Activated T-helper 1 cell treated with anti-CD3 and anti-CD28 coated beads, Interleukin-12 subunit alpha, Interleukin-12 subunit beta, Interleukin-2, Interleukin-4 antibody, amounts not matched to agents 30 ng/mL and 10 ng/mL and 1 ng/mL, durations not matched to agents 14 hours and 24 hours and 36 hours (primary cell): ENCODE measurements at regions of chr11 and their contacts with region 1.

Region 1: GRCh38 chr11:47213985-47214564 is 699 bp upstream of the DDB2 start:
- DNase-seq: peak; percentile 77
- H3K4me3 Mint-ChIP-seq: peak overlapping the region; percentile 96
- H3K27ac Mint-ChIP-seq: peak overlapping the region; percentile 100
- H3K4me1 Mint-ChIP-seq: peaks cover 45% of the 10 kb centered on the region
- H3K27me3 Mint-ChIP-seq: peaks cover 2% of the 10 kb centered on the region

Region 2: DNA sequence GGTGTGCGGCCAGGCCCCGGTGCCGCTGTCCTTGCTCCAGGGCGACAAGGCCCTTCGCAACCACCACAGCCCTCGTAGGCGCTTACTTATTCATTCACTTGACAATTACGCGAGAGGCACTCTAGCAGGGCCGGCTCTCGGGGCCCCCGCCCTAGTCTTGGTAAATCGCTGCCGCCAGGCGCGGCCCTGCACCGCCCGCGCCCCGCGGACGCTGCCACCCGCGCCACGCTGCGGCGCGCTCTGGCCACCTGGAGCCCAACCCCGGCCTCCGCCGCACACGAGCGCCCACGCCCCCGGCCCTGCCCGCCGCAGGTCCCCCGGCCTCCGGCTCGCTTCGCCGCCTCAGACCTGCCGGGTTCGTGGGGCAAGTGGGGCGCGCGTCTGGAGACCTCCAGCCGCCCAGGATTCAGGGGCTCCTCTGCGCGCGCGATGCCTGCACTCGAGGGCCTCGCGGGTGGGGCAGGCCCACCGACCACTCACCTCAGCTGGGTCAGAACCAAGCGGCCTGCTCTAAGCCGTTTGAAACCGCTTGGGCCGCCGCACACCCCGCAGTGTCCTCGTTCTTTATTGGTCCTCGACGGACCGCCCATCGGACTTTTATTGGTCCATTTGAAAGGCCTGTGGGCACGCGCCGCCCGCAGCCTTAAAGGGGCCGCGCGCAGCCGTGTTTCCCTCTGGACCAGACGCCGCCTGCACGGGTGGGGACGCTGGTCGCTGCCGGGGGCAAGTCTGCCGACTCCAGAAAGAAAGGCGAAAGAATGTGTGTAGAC is 368.1 kb before region 1 on chr11 and contains the start of gene CKAP5:
- intact Hi-C with region 1: loop called (anchors 1 kb)
- DNase-seq: peak; percentile 87
- H3K4me3 Mint-ChIP-seq: peak within 1 kb of the TSS; percentile 98
- H3K27ac Mint-ChIP-seq: peak within 1 kb of the TSS; percentile 98
- H3K4me1 Mint-ChIP-seq: peaks cover 41% of the 10 kb centered on the region
- H3K27me3 Mint-ChIP-seq: peaks cover 4% of the 10 kb centered on the region
- total RNA-seq, gene CKAP5: 121 TPM in 2 replicates

Region 3: GRCh38 chr11:47186076-47186936 is 27.8 kb before region 1 on chr11 and contains the start of gene PACSIN3:
- intact Hi-C with region 1: loop called (anchors 1 kb)
- DNase-seq: peak; percentile 29
- H3K4me3 Mint-ChIP-seq: peak within 1 kb of the TSS; percentile 79
- H3K27ac Mint-ChIP-seq: no peak within 1 kb of the TSS
- H3K4me1 Mint-ChIP-seq: no peaks in the 10 kb centered on the region
- H3K27me3 Mint-ChIP-seq: peaks cover 44% of the 10 kb centered on the region
- total RNA-seq, gene PACSIN3: 14.5 and 17.0 TPM in 2 replicates

Region 4: GRCh38 chr11:47248664-47249377 is 34.7 kb after region 1 on chr11 and contains the start of gene ACP2:
- intact Hi-C with region 1: loop called (anchors 1 kb)
- DNase-seq: peak; percentile 82
- H3K4me3 Mint-ChIP-seq: peak within 1 kb of the TSS; percentile 100
- H3K27ac Mint-ChIP-seq: peak within 1 kb of the TSS; percentile 98
- H3K4me1 Mint-ChIP-seq: peaks cover 27% of the 10 kb centered on the region
- H3K27me3 Mint-ChIP-seq: no peaks in the 10 kb centered on the region
- total RNA-seq, gene ACP2: 31.8 and 33.8 TPM in 2 replicates

Region 5: GRCh38 chr11:47642099-47642855 is 428.2 kb after region 1 on chr11 and contains the start of gene MTCH2:
- intact Hi-C with region 1: loop called (anchors 5 kb)
- DNase-seq: peak; percentile 95
- H3K4me3 Mint-ChIP-seq: peak within 1 kb of the TSS; percentile 96
- H3K27ac Mint-ChIP-seq: peak within 1 kb of the TSS; percentile 97
- H3K4me1 Mint-ChIP-seq: peaks cover 30% of the 10 kb centered on the region
- H3K27me3 Mint-ChIP-seq: no peaks in the 10 kb centered on the region
- total RNA-seq, gene MTCH2: 116 and 118 TPM in 2 replicates